ENCODE measurements at regions of chr17 and their contacts with region 1.

Region 1: GRCh38 chr17:36629252-36629847 is 28.0 kb downstream of the MRM1 start:
- DNase-seq: peak; percentile 12 to 83
- H3K4me3 ChIP-seq: no peak overlapping the region
- H3K27ac ChIP-seq: no peak overlapping the region
- H3K4me1 ChIP-seq: no peaks in the 10 kb centered on the region
- H3K27me3 ChIP-seq: no peaks in the 10 kb centered on the region
- CTCF ChIP-seq: peak; percentile 90 to 98 (median 96)

Region 2: DNA sequence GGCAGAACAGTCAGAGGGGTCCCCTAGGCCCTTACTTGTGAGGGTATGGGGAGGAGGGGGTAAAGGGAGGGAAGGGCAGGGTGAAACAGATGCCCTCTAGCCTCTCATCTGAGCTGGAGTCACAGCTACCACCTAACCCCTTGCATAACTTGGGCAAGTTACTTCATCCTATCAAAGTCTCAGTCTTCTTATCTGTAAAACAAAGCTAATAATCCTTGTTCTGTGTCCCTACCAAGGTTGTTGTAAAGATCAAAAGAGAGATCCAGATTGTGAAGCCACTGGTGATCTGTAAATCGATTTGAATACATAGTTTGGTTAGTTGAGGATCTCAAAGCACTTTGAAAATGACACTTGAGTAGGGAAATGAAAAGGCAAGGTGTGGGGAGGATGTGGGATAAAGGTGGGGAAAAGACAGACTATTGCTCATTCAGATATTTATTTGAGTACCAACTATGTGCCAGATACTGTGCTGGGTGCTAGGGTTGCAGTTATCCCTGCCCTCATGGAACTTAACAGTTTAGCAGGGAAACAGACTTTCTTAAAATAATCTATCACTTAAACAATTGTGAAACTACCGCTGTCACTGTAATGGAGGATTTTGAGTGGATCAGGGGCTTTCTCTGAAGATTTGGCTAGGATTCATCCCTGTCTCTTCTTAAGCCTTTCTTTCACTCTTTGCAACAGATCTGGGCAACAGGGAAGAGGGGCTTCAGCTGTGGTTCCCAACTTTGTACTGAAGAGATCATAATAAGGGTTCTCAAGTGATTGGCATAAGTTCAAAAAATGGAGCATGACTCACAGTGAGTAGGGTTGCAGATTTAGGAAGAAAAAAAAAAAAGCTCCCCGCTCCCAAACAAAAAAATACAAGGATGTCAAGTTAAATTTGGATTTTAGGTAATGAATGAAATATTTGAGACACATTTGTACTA is 763.7 kb before region 1 on chr17:
- intact Hi-C with region 1: no loop called
- DNase-seq: no peak
- H3K4me3 ChIP-seq: no peak overlapping the region
- H3K27ac ChIP-seq: no peak overlapping the region
- H3K4me1 ChIP-seq: peaks cover 0 to 7% of the 10 kb centered on the region in 2 donors
- H3K27me3 ChIP-seq: no peaks in the 10 kb centered on the region
- CTCF ChIP-seq: no peak

Region 3: GRCh38 chr17:37047631-37048104 is 418.3 kb after region 1 on chr17:
- intact Hi-C with region 1: loop called (anchors 1 kb)
- DNase-seq: peak; percentile 26 to 75
- H3K4me3 ChIP-seq: no peak overlapping the region
- H3K27ac ChIP-seq: no peak overlapping the region
- H3K4me1 ChIP-seq: no peaks in the 10 kb centered on the region
- H3K27me3 ChIP-seq: no peaks in the 10 kb centered on the region
- CTCF ChIP-seq: peak; percentile 65 to 90 (median 81)

Region 4: GRCh38 chr17:37239690-37240334 is 610.5 kb after region 1 on chr17:
- intact Hi-C with region 1: loop called (anchors 5 kb)
- DNase-seq: no peak
- H3K4me3 ChIP-seq: no peak overlapping the region
- H3K27ac ChIP-seq: no peak overlapping the region
- H3K4me1 ChIP-seq: no peaks in the 10 kb centered on the region
- H3K27me3 ChIP-seq: no peaks in the 10 kb centered on the region
- CTCF ChIP-seq: peak in 2 of 3 experiments; percentile 9 to 46